SK-N-SH (cell line): ENCODE measurements at regions of chr10 and their contacts with region 1.

Region 1: GRCh38 chr10:79202188-79203013 is 133.6 kb downstream of the ZMIZ1 start:
- DNase-seq: peak; percentile 73
- H3K4me3 ChIP-seq: no peak overlapping the region; a peak in 1 of 4 replicates
- H3K27ac ChIP-seq: peak overlapping the region; percentile 32 to 93; a peak in 3 of 4 replicates
- H3K4me1 ChIP-seq: peaks cover 7 to 60% of the 10 kb centered on the region in 2 experiments
- H3K27me3 ChIP-seq: no peaks in the 10 kb centered on the region
- CTCF ChIP-seq: peak; percentile 73
- EP300 ChIP-seq: no peak
- RAD21 ChIP-seq: peak; percentile 63

Region 2: GRCh38 chr10:79068562-79069324 is 133.7 kb before region 1 on chr10 and contains the start of gene ZMIZ1:
- CTCF ChIA-PET with region 1: interaction called, 129 read pairs
- POLR2A ChIA-PET with region 1: interaction called, 4 read pairs
- DNase-seq: peak; percentile 88
- H3K4me3 ChIP-seq: peak within 1 kb of the TSS; percentile 93 to 99
- H3K27ac ChIP-seq: peak within 1 kb of the TSS; percentile 88 to 97
- H3K4me1 ChIP-seq: peaks cover 9 to 43% of the 10 kb centered on the region in 2 experiments
- H3K27me3 ChIP-seq: no peaks in the 10 kb centered on the region
- CTCF ChIP-seq: 0 out of 2 replicates have a peak, but pooled peaks have one; percentile 1
- EP300 ChIP-seq: peak in 1 of 2 experiments; percentile 32; a peak in 1 of 4 replicates
- RAD21 ChIP-seq: peak; percentile 29
- polyA plus RNA-seq, gene ZMIZ1: 6.6 and 23.5 TPM in 2 replicates

Region 3: GRCh38 chr10:79184145-79184625 is 18.2 kb before region 1 on chr10:
- CTCF ChIA-PET with region 1: interaction called, 136 read pairs
- POLR2A ChIA-PET with region 1: interaction called, 3 read pairs
- DNase-seq: peak; percentile 66
- H3K4me3 ChIP-seq: no peak overlapping the region
- H3K27ac ChIP-seq: peak overlapping the region; percentile 81 to 100
- H3K4me1 ChIP-seq: peaks cover 49 to 98% of the 10 kb centered on the region in 2 experiments
- H3K27me3 ChIP-seq: no peaks in the 10 kb centered on the region
- CTCF ChIP-seq: no peak
- EP300 ChIP-seq: peak in 1 of 2 experiments; percentile 38; a peak in 1 of 4 replicates
- RAD21 ChIP-seq: no peak

Region 4: GRCh38 chr10:79189853-79190435 is 12.5 kb before region 1 on chr10:
- CTCF ChIA-PET with region 1: interaction called, 136 read pairs
- POLR2A ChIA-PET with region 1: interaction called, 9 read pairs
- DNase-seq: no peak
- H3K4me3 ChIP-seq: no peak overlapping the region
- H3K27ac ChIP-seq: peak overlapping the region; percentile 60 to 93; a peak in 3 of 4 replicates
- H3K4me1 ChIP-seq: peaks cover 44 to 97% of the 10 kb centered on the region in 2 experiments
- H3K27me3 ChIP-seq: no peaks in the 10 kb centered on the region
- CTCF ChIP-seq: no peak
- EP300 ChIP-seq: no peak
- RAD21 ChIP-seq: no peak

Region 5: DNA sequence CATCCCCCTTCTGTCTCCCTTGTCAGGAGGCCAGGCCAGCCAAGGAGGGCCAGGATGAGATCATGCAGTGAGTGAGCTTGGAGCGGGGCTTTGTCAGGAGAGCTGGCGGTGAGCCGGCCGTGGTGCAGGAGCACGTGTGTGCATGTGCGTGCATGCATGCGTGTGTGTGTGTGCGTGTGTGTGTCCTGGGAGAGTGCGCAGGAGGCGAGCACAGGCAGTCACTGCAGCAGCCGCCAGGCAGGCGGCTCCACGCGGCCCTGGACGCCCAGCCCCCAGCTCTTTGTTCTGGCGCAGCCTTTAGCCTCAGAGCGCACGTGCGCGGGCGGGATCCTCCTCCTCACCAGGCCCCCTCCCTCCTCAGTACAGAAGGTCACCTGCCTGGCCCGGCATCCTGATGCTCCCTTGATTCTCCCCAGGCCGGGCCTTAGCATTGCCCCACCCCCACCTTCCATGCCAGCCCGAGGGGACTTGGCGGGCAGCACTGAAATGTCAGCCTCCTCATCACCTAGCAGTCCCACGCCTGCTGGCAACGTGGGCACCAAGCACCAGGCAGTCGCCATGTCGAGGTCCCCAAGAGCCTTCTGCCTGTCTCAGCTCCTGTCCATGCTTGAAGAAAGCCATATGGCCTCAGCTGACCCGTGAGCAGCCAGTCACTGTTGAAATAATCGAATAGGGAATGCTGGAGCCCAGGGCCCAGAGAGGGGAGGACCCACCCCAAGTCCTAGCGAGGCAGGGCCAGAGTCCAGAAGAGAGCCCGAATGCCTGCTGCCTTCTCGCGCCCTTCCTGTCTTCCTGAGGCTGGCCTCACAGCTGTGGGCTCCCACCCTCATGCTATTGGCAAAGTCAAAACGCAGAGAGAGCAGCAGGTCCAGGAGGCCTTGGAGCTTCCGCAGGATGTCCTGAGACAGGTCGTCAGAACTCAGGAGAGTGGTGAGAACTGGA is 19.0 kb after region 1 on chr10:
- CTCF ChIA-PET with region 1: interaction called, 11 read pairs
- POLR2A ChIA-PET with region 1: interaction called, 69 read pairs
- DNase-seq: peak; percentile 84
- H3K4me3 ChIP-seq: no peak overlapping the region
- H3K27ac ChIP-seq: peak overlapping the region; percentile 72 to 93
- H3K4me1 ChIP-seq: peaks cover 33 to 79% of the 10 kb centered on the region in 2 experiments
- H3K27me3 ChIP-seq: no peaks in the 10 kb centered on the region
- CTCF ChIP-seq: no peak
- EP300 ChIP-seq: peak in 1 of 2 experiments; percentile 49; a peak in 2 of 4 replicates
- RAD21 ChIP-seq: peak; percentile 31

Region 6: GRCh38 chr10:79242620-79243152 is 40.3 kb after region 1 on chr10:
- CTCF ChIA-PET with region 1: interaction called, 4 read pairs
- POLR2A ChIA-PET with region 1: interaction called, 22 read pairs
- DNase-seq: peak; percentile 86
- H3K4me3 ChIP-seq: peak overlapping the region; percentile 53 to 59
- H3K27ac ChIP-seq: peak overlapping the region; percentile 41 to 99; a peak in 3 of 4 replicates
- H3K4me1 ChIP-seq: peaks cover 68 to 85% of the 10 kb centered on the region in 2 experiments
- H3K27me3 ChIP-seq: no peaks in the 10 kb centered on the region
- CTCF ChIP-seq: no peak
- EP300 ChIP-seq: no peak
- RAD21 ChIP-seq: peak; percentile 16; the same call in 1 of the 2 replicates

Region 7: GRCh38 chr10:79374312-79375191 is 172.2 kb after region 1 on chr10:
- CTCF ChIA-PET with region 1: no interaction called
- POLR2A ChIA-PET with region 1: no interaction called
- DNase-seq: peak; percentile 84
- H3K4me3 ChIP-seq: no peak overlapping the region
- H3K27ac ChIP-seq: no peak overlapping the region
- H3K4me1 ChIP-seq: peaks cover 7% of the 10 kb centered on the region in 2 experiments; a peak in 2 of 4 replicates
- H3K27me3 ChIP-seq: no peaks in the 10 kb centered on the region
- CTCF ChIP-seq: peak; percentile 91
- EP300 ChIP-seq: no peak
- RAD21 ChIP-seq: peak; percentile 99

Region 8: GRCh38 chr10:79438021-79438698 is 235.8 kb after region 1 on chr10:
- CTCF ChIA-PET with region 1: no interaction called
- POLR2A ChIA-PET with region 1: no interaction called
- DNase-seq: no peak
- H3K4me3 ChIP-seq: no peak overlapping the region
- H3K27ac ChIP-seq: no peak overlapping the region
- H3K4me1 ChIP-seq: peaks cover 20 to 62% of the 10 kb centered on the region in 2 experiments; a peak in 3 of 4 replicates
- H3K27me3 ChIP-seq: no peaks in the 10 kb centered on the region
- CTCF ChIP-seq: peak; percentile 32
- EP300 ChIP-seq: no peak
- RAD21 ChIP-seq: peak; percentile 63

Region 9: GRCh38 chr10:79628988-79629954 is 426.9 kb after region 1 on chr10:
- CTCF ChIA-PET with region 1: no interaction called
- POLR2A ChIA-PET with region 1: no interaction called
- DNase-seq: no peak
- H3K4me3 ChIP-seq: no peak overlapping the region
- H3K27ac ChIP-seq: no peak overlapping the region
- H3K4me1 ChIP-seq: no peaks in the 10 kb centered on the region
- H3K27me3 ChIP-seq: no peaks in the 10 kb centered on the region
- CTCF ChIP-seq: no peak
- EP300 ChIP-seq: no peak
- RAD21 ChIP-seq: no peak